ENCODE measurements at regions of chr20 and their contacts with region 1.

Region 1: DNA sequence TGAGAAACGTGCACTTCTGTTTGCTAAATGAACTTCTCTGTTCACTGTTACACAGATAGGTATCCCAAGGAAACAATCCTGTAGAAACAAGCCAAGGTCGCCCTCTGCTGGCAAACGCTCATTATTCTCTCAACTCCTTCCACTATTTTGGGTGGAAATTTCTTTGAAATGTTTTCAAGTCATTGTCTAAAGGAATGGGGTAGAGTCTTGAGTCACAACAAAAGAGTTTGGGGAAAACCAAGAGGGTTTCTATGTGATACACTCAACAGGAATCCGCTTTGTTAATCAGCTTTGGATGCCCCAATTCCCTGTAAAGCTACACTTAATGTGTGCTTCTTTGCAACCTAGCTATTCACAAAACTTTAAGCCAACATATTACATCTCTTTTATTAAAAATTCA is 4.6 kb upstream of the RAE1 start:
- DNase-seq: peak; percentile 73 to 90 (median 78)
- ATAC-seq: peak; percentile 59 to 64
- H3K4me3 ChIP-seq: no peak overlapping the region
- H3K27ac ChIP-seq: no peak overlapping the region
- H3K4me1 ChIP-seq: no peaks in the 10 kb centered on the region
- H3K27me3 ChIP-seq: no peaks in the 10 kb centered on the region

Region 2: GRCh38 chr20:56540420-56540819 is 806.1 kb before region 1 on chr20:
- intact Hi-C with region 1: loop called in 1 of 4 experiments (anchors 10 kb)
- DNase-seq: no peak
- ATAC-seq: no peak
- H3K4me3 ChIP-seq: no peak overlapping the region
- H3K27ac ChIP-seq: no peak overlapping the region
- H3K4me1 ChIP-seq: no peaks in the 10 kb centered on the region
- H3K27me3 ChIP-seq: no peaks in the 10 kb centered on the region

Region 3: GRCh38 chr20:57308813-57309271 is 37.6 kb before region 1 on chr20:
- intact Hi-C with region 1: no loop called
- DNase-seq: peak in 1 of 3 donors; percentile 27
- ATAC-seq: no peak
- H3K4me3 ChIP-seq: no peak overlapping the region
- H3K27ac ChIP-seq: no peak overlapping the region
- H3K4me1 ChIP-seq: no peaks in the 10 kb centered on the region
- H3K27me3 ChIP-seq: no peaks in the 10 kb centered on the region

Measured in right cardiac atrium (tissue), 5 donors.